Activated CD4-positive, alpha-beta T cell treated with anti-CD3 and anti-CD28 coated beads for 36 hours (primary cell): ENCODE measurements at regions of chr1 and their contacts with region 1.

Region 1: DNA sequence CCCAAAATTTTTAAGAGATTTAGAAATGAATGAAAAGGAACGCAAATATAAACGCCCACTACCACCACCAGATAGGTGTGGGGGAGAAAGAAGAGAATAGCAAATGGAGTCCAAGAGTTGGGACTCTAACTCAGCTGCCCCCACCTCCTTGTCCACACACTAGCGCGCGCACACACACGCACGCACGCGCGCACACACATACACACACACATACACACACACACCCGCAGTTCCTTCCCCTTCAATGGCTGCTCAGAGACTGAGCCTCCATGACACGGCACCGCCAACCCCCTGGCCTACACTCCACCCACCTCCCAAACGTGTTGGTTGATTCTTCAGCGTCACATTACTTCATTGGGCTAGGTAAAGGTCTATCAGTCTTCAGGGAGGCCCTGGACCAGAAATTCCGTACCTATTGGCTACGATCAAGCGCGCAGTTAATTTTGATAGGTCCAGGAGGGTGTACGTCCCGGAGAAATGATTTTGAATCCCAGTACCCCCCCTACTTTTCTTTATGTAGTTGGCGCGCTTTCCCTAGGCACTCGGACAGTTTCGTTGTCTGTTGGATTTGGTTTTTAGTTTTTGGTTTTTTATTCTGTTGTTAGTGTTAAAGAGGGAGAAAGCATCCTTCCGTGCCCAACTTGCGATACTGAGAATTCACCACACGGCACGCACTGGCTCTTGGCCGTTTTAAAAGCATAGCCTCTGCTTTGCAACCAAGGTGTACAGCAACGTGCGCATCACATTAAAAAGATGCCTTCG is at the start of gene ANP32E:
- DNase-seq: peak; percentile 96
- ATAC-seq: peak; percentile 91
- H3K4me3 Mint-ChIP-seq: no peak within 1 kb of the TSS
- H3K27ac Mint-ChIP-seq: peak within 1 kb of the TSS; percentile 99
- H3K4me1 Mint-ChIP-seq: peaks cover 14% of the 10 kb centered on the region
- H3K27me3 Mint-ChIP-seq: no peaks in the 10 kb centered on the region
- total RNA-seq, gene ANP32E: 176 to 212 TPM

Region 2: DNA sequence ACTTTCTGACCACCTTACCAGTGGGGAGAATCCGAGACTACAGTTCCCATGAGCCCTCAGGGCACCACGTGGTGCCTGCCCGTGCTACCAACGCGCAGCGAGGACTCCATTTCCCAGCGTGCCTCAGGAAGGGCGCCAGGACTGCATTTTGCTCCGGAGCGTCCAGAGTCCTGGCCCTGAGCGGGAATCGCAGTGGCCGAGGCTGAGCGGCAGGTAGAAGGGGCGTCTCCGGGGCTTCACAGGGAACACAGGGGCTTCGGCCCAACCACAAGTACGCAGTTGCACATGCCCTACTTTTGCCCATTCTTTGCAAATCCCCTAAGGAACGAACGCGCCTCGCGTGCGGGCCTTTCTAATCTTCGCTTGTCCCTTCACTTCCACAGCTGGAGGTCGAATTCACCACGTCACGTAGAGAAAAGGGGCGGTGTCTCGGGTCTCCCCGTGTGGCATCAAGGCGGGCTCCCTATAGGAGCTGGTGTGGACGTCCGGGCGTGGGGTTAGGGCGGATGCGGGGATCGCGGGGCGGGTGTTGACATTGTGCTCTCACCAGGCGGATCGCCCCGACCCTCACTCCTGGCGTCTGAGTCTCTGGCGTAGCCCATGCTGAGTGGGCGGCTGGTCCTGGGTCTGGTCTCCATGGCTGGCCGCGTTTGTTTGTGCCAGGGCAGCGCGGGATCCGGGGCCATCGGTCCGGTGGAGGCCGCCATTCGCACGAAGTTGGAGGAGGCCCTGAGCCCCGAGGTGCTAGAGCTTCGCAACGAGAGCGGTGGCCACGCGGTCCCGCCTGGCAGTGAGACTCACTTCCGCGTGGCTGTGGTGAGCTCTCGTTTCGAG is 336.4 kb before region 1 on chr1 and contains the start of gene BOLA1:
- CTCF ChIA-PET with region 1: no interaction called
- POLR2A ChIA-PET with region 1: no interaction called
- intact Hi-C with region 1: loop called in 1 of 2 experiments (anchors 1 kb)
- DNase-seq: peak; percentile 91
- ATAC-seq: peak; percentile 99
- H3K4me3 Mint-ChIP-seq: peak within 1 kb of the TSS; percentile 89
- H3K27ac Mint-ChIP-seq: peak within 1 kb of the TSS; percentile 95
- H3K4me1 Mint-ChIP-seq: peaks cover 18% of the 10 kb centered on the region
- H3K27me3 Mint-ChIP-seq: no peaks in the 10 kb centered on the region
- total RNA-seq, gene BOLA1: 24.1 to 30.0 TPM

Region 3: DNA sequence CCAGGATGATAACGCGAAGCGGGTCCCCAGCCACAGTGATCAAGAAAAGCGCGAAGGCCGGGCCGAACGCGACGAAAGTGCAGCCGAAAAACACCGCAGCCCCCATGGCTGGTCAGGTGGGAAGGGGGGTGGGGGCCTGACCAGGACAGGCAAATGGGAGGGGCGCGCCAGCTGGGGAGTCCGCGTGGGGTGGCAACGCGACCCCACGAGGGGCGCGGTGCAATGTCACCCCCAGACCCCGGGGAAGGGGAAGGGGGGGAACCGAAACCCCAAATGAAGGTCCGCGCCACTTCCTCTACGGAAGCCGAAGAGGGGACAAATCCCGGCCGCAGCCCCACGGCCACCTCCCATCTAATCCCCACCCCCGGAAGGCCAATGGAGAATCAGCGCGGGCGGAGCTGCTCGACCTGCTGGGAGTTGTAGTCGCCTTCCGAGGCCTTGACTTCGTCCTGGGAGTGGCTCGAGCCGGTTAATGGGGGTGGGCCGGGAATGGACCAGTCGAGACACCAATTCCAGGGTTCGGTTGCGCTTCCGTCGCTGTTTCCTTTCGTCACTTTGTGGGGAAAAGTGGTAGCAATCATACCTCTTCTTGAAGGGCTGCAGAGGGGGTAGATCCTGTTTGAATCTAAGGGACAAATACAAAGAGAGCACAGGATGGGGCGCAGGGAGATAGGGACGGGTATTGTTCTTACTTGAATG is 32.8 kb after region 1 on chr1 and contains the start of gene APH1A:
- CTCF ChIA-PET with region 1: no interaction called
- POLR2A ChIA-PET with region 1: interaction called, 6 read pairs
- intact Hi-C with region 1: loop called (anchors 1 kb)
- DNase-seq: peak; percentile 97
- ATAC-seq: peak; percentile 99
- H3K4me3 Mint-ChIP-seq: peak within 1 kb of the TSS; percentile 89
- H3K27ac Mint-ChIP-seq: peak within 1 kb of the TSS; percentile 98
- H3K4me1 Mint-ChIP-seq: peaks cover 25% of the 10 kb centered on the region
- H3K27me3 Mint-ChIP-seq: no peaks in the 10 kb centered on the region
- total RNA-seq, gene APH1A: 62.4 to 89.3 TPM

Region 4: GRCh38 chr1:150321826-150322166 is 85.8 kb after region 1 on chr1:
- CTCF ChIA-PET with region 1: interaction called, 3 read pairs
- POLR2A ChIA-PET with region 1: no interaction called
- intact Hi-C with region 1: loop called in 1 of 2 experiments (anchors 1 kb)
- DNase-seq: no peak
- ATAC-seq: no peak
- H3K4me3 Mint-ChIP-seq: peak overlapping the region; percentile 93
- H3K27ac Mint-ChIP-seq: peak overlapping the region; percentile 100
- H3K4me1 Mint-ChIP-seq: peaks cover 27% of the 10 kb centered on the region
- H3K27me3 Mint-ChIP-seq: no peaks in the 10 kb centered on the region

Region 5: GRCh38 chr1:150515328-150516048 is 279.5 kb after region 1 on chr1 and contains the start of gene FALEC:
- CTCF ChIA-PET with region 1: no interaction called
- POLR2A ChIA-PET with region 1: no interaction called
- intact Hi-C with region 1: loop called in 1 of 2 experiments (anchors 1 kb)
- DNase-seq: peak; percentile 95
- ATAC-seq: peak; percentile 99
- H3K4me3 Mint-ChIP-seq: peak within 1 kb of the TSS; percentile 80
- H3K27ac Mint-ChIP-seq: peak within 1 kb of the TSS; percentile 59
- H3K4me1 Mint-ChIP-seq: peaks cover 10% of the 10 kb centered on the region
- H3K27me3 Mint-ChIP-seq: no peaks in the 10 kb centered on the region
- total RNA-seq, gene FALEC: 0.34 TPM in 1 of 2 experiments, not detected in the other

Region 6: DNA sequence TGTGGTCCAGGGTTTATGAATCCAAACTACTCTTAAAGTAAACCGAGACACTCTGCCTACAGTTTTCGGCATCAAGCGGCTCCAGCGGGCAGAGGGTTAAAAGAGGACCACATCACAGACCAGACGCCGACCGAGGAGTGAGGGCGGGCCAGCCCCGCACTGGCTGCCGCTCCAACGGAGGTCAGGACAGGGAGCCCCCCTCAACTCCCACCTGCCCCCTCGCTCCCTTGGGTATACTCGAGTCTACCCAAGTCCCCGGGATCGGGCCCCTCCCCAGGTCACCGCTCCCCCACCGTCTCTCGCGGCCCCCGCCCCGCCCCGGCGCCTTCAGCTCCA is 640.1 kb after region 1 on chr1:
- CTCF ChIA-PET with region 1: no interaction called
- POLR2A ChIA-PET with region 1: no interaction called
- intact Hi-C with region 1: loop called in 1 of 2 experiments (anchors 2 kb)
- DNase-seq: no peak
- ATAC-seq: peak; percentile 37
- H3K4me3 Mint-ChIP-seq: peak overlapping the region; percentile 88
- H3K27ac Mint-ChIP-seq: peak overlapping the region; percentile 95
- H3K4me1 Mint-ChIP-seq: peaks cover 25% of the 10 kb centered on the region
- H3K27me3 Mint-ChIP-seq: no peaks in the 10 kb centered on the region